Mammary epithelial cell (primary cell): ENCODE measurements at regions of chrX and their contacts with region 1.

Region 1: GRCh38 chrX:38175140-38175539 is 45.5 kb downstream of the SRPX start:
- DNase-seq: peak; percentile 21
- H3K4me3 ChIP-seq: no peak overlapping the region
- H3K27ac ChIP-seq: no peak overlapping the region
- H3K4me1 ChIP-seq: no peaks in the 10 kb centered on the region
- H3K27me3 ChIP-seq: no peaks in the 10 kb centered on the region
- CTCF ChIP-seq: peak; percentile 64 to 74

Region 2: GRCh38 chrX:36908801-36909676 is 1266.1 kb before region 1 on chrX:
- CTCF ChIA-PET with region 1: no interaction called
- dilution Hi-C with region 1: no loop called
- in situ Hi-C with region 1: no loop called
- intact Hi-C with region 1: loop called (anchors 5 kb)
- DNase-seq: peak; percentile 32
- H3K4me3 ChIP-seq: no peak overlapping the region
- H3K27ac ChIP-seq: no peak overlapping the region
- H3K4me1 ChIP-seq: no peaks in the 10 kb centered on the region
- H3K27me3 ChIP-seq: no peaks in the 10 kb centered on the region
- CTCF ChIP-seq: peak; percentile 56 to 60

Region 3: GRCh38 chrX:37509349-37509748 is 665.8 kb before region 1 on chrX:
- CTCF ChIA-PET with region 1: no interaction called
- dilution Hi-C with region 1: no loop called
- in situ Hi-C with region 1: no loop called
- intact Hi-C with region 1: loop called (anchors 2 kb)
- DNase-seq: peak; percentile 6
- H3K4me3 ChIP-seq: no peak overlapping the region
- H3K27ac ChIP-seq: no peak overlapping the region
- H3K4me1 ChIP-seq: no peaks in the 10 kb centered on the region
- H3K27me3 ChIP-seq: peaks cover 2% of the 10 kb centered on the region
- CTCF ChIP-seq: peak; percentile 34 to 47

Region 4: DNA sequence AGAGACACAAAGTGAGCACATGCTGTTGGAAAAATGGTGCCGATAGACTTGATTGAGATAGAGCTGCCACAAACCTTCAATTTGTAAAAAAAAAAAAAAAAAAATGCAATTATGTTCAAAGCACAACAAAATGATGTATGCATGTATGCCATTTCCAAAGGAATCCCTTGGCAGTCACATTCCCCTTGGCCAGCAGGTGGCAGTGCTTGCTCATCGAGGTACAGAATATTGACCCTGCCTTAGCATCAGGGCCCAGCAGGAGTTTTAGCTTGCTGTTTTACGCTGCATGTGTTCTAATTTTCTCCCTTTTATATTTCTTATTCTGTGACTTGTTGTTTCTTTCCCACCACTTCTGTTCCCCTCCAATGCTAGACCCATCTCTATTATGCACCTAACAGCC is 429.8 kb before region 1 on chrX:
- CTCF ChIA-PET with region 1: no interaction called
- dilution Hi-C with region 1: no loop called
- in situ Hi-C with region 1: loop called in 1 of 2 experiments (anchors 10 kb)
- intact Hi-C with region 1: loop called (anchors 1 kb)
- DNase-seq: peak; percentile 51
- H3K4me3 ChIP-seq: no peak overlapping the region
- H3K27ac ChIP-seq: no peak overlapping the region
- H3K4me1 ChIP-seq: no peaks in the 10 kb centered on the region
- H3K27me3 ChIP-seq: no peaks in the 10 kb centered on the region
- CTCF ChIP-seq: peak; percentile 90 to 94

Region 5: DNA sequence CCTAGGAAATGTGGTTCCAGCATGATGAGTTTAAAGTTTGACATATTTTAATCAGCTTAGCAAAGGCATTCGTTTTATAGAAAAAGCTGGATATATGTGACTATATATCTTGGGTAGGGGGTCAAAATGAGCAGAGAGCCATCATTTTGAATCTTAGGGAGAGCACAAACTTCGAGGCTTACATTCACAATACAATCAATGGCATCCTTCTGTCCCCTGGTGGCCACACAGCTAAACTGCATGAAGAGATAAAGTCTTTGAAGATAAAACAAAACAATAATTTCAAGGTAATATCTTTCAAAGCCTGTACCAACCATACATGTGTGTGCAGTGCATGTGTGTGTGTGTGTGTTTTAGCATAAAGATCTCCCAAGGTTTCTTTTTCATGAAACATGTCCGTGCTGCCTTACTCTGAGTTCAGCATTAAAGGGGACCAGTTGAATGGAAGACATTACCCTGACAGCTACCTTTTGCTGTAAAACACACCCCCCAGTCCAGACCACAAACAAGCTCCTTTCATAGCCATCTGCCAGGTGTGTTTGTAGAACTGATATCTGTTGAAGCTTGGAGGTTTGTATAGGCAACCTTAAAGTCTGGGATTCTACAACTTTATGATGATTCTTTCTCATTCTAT is 349.8 kb before region 1 on chrX:
- CTCF ChIA-PET with region 1: no interaction called
- dilution Hi-C with region 1: no loop called
- in situ Hi-C with region 1: no loop called
- intact Hi-C with region 1: loop called (anchors 2 kb)
- DNase-seq: peak; percentile 26
- H3K4me3 ChIP-seq: no peak overlapping the region
- H3K27ac ChIP-seq: no peak overlapping the region
- H3K4me1 ChIP-seq: no peaks in the 10 kb centered on the region
- H3K27me3 ChIP-seq: peaks cover 2% of the 10 kb centered on the region
- CTCF ChIP-seq: peak; percentile 98

Region 6: GRCh38 chrX:37926700-37927099 is 248.4 kb before region 1 on chrX:
- CTCF ChIA-PET with region 1: no interaction called
- dilution Hi-C with region 1: no loop called
- in situ Hi-C with region 1: loop called (anchors 10 kb)
- intact Hi-C with region 1: loop called (anchors 2 kb)
- DNase-seq: no peak
- H3K4me3 ChIP-seq: no peak overlapping the region
- H3K27ac ChIP-seq: no peak overlapping the region
- H3K4me1 ChIP-seq: peaks cover 3% of the 10 kb centered on the region
- H3K27me3 ChIP-seq: peaks cover 6% of the 10 kb centered on the region
- CTCF ChIP-seq: peak; percentile 44 to 61

Region 7: DNA sequence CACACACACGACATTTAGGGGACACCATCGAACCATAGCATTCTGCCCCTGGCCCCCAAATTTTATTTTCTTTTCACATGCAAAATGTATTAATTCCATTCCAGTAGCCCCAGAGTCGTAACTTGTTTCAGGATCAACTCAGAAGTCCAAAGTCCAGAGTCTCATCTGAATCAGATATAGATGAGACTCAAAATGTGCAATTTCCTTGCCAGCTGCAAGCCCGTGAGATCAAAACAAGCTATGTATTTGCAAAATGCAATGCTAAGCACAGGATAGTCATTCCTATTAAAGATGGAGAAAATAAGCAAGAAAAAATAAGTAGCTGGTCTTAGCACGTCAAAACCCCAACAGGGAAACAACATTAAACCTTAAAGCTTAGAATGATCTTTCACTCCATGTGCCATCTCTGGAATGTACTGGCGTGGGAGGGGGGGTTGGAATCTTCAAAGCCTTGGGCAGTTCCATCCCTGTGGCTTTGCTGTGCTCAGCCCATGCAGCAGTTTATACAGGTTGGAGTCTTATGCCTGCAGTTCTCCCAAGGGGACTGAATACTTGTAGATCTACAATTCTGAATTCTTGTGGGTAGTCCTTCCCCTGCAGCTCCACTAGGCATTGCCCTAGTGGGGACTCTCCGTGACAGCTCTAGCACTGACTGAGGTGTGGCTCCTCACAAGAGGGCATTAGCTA is 216.5 kb before region 1 on chrX:
- CTCF ChIA-PET with region 1: no interaction called
- dilution Hi-C with region 1: loop called (anchors 5 kb)
- in situ Hi-C with region 1: no loop called
- intact Hi-C with region 1: no loop called
- DNase-seq: no peak
- H3K4me3 ChIP-seq: no peak overlapping the region
- H3K27ac ChIP-seq: no peak overlapping the region
- H3K4me1 ChIP-seq: no peaks in the 10 kb centered on the region
- H3K27me3 ChIP-seq: no peaks in the 10 kb centered on the region
- CTCF ChIP-seq: no peak